GM12878 (cell line): ENCODE measurements at regions of chr11 and their contacts with region 1.

Region 1: GRCh38 chr11:17730608-17731462 is 3.7 kb upstream of the KCNC1 start:
- DNase-seq: peak; percentile 4
- ATAC-seq: peak; percentile 97
- H3K4me3 ChIP-seq: no peak overlapping the region
- H3K27ac ChIP-seq: no peak overlapping the region
- H3K4me1 ChIP-seq: no peaks in the 10 kb centered on the region
- H3K27me3 ChIP-seq: peaks cover 2 to 3% of the 10 kb centered on the region in 2 experiments; a peak in 2 of 4 replicates
- CTCF ChIP-seq: peak; percentile 88 to 97 (median 95)
- EP300 ChIP-seq: no peak
- POLR2A ChIP-seq: no peak
- RAD21 ChIP-seq: peak; percentile 95

Region 2: DNA sequence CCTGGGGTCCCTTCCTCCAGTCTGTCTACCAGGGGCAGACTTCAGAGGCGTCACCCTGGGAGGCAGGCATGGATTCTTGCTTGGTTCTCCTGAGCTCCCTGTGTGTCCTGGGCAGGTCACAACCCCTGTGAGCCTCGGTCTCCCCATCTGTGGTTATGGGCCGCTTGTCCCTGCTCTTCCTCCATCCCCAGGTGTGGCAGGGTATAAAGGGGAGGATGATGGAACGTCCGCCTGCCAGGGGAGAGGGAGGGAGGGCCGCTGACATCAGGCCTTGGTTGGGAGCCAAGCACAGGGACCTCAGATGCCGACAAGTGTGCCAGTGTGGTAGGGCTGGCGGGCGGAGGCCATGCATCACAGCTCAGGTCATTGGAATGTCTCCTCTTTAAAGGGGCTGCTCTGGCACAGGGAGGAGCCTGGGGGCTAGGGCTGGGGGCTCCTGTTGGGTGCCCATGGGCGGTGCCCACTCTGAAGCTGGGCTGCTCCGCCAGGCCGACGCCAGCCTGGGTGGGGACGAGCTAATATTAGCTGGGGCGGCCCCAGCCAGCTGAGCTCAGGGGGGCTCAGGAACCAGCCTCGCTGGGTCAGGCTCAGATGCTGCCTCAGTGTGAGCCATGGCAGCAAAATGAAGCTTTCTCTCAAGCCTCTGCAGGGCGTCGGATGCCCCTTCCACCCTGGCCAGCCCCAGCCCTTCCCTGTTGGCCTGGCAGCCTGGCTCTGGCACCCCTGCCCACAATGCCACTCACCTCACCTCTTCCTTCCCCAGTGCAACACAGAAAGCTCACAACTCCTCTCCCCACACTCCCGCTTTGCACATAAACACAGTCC is 16.5 kb after region 1 on chr11:
- CTCF ChIA-PET with region 1: interaction called, 13 read pairs
- POLR2A ChIA-PET with region 1: no interaction called
- RAD21 ChIA-PET with region 1: interaction called, 3 read pairs
- SMC1A ChIA-PET with region 1: interaction called, 5 read pairs
- in situ Hi-C with region 1: no loop called
- intact Hi-C with region 1: no loop called
- DNase-seq: no peak
- ATAC-seq: no peak
- H3K4me3 ChIP-seq: no peak overlapping the region
- H3K27ac ChIP-seq: no peak overlapping the region
- H3K4me1 ChIP-seq: no peaks in the 10 kb centered on the region
- H3K27me3 ChIP-seq: peaks cover 0 to 1% of the 10 kb centered on the region in 2 experiments; a peak in 2 of 4 replicates
- CTCF ChIP-seq: no peak
- EP300 ChIP-seq: no peak
- POLR2A ChIP-seq: no peak
- RAD21 ChIP-seq: no peak

Region 3: GRCh38 chr11:17770048-17770652 is 39.3 kb after region 1 on chr11:
- CTCF ChIA-PET with region 1: interaction called, 10 read pairs
- POLR2A ChIA-PET with region 1: no interaction called
- RAD21 ChIA-PET with region 1: interaction called, 3 read pairs
- SMC1A ChIA-PET with region 1: no interaction called
- in situ Hi-C with region 1: no loop called
- intact Hi-C with region 1: no loop called
- DNase-seq: no peak
- ATAC-seq: peak; percentile 33; the same call in 2 of the 3 replicates
- H3K4me3 ChIP-seq: no peak overlapping the region
- H3K27ac ChIP-seq: no peak overlapping the region
- H3K4me1 ChIP-seq: no peaks in the 10 kb centered on the region
- H3K27me3 ChIP-seq: no peaks in the 10 kb centered on the region
- CTCF ChIP-seq: peak in 2 of 3 experiments; percentile 12 to 20; a peak in 1 of 6 replicates
- EP300 ChIP-seq: no peak
- POLR2A ChIP-seq: no peak
- RAD21 ChIP-seq: no peak

Region 4: DNA sequence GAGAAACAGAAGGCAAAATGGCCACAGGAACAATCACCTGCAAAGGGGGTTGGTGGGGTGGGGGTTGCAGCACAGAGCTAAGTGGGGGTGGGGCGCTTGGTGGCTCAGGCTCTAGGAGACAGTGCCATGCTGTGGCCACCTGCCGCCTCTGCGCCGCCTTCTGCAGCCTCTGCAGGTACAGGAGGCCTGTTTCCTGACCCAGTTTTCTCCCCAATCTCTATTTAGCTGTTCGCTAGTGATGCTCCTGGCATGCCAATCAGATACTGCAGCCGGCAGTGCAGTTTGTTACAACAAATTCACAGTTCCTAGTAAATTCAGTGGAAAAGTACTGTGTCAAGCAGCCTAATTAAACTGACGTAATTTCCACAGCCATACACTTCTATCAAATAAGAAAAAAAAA is 175.6 kb after region 1 on chr11:
- CTCF ChIA-PET with region 1: interaction called, 12 read pairs
- POLR2A ChIA-PET with region 1: no interaction called
- RAD21 ChIA-PET with region 1: interaction called, 4 read pairs
- SMC1A ChIA-PET with region 1: interaction called, 8 read pairs
- in situ Hi-C with region 1: no loop called
- intact Hi-C with region 1: no loop called
- DNase-seq: no peak
- ATAC-seq: peak; percentile 60; the same call in 2 of the 3 replicates
- H3K4me3 ChIP-seq: no peak overlapping the region
- H3K27ac ChIP-seq: no peak overlapping the region
- H3K4me1 ChIP-seq: peaks cover 5% of the 10 kb centered on the region; the same call in 1 of the 2 replicates
- H3K27me3 ChIP-seq: no peaks in the 10 kb centered on the region
- CTCF ChIP-seq: 0 out of 6 replicates have a peak, but pooled peaks of 1 of the 3 experiments have one; percentile 15
- EP300 ChIP-seq: no peak
- POLR2A ChIP-seq: no peak
- RAD21 ChIP-seq: 0 out of 2 replicates have a peak, but pooled peaks have one; percentile 2

Region 5: DNA sequence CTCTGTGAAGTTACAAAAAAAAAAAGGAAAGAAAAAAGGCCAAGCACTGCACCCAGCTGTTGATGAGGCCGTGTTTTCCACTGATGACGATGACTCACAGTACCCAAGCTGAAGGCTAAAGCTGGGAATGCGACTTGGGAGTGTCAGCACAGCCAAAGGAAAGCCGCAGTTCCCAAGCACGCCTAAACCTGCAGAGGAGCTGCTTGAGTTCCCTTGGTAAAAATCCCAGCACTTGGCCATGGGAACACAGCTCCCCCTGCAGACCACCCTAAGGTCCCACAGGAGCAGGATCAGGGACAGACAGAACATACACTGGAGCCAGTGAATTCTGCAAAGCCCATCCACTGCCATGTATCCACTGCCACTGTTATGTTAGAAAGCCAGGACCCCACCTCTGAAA is 242.2 kb after region 1 on chr11:
- CTCF ChIA-PET with region 1: interaction called, 268 read pairs
- POLR2A ChIA-PET with region 1: no interaction called
- RAD21 ChIA-PET with region 1: interaction called, 76 read pairs
- SMC1A ChIA-PET with region 1: interaction called, 99 read pairs
- in situ Hi-C with region 1: loop called (anchors 5 kb)
- intact Hi-C with region 1: no loop called
- DNase-seq: no peak
- ATAC-seq: peak; percentile 43; the same call in 1 of the 3 replicates
- H3K4me3 ChIP-seq: no peak overlapping the region
- H3K27ac ChIP-seq: no peak overlapping the region
- H3K4me1 ChIP-seq: no peaks in the 10 kb centered on the region
- H3K27me3 ChIP-seq: no peaks in the 10 kb centered on the region
- CTCF ChIP-seq: peak; percentile 26 to 58 (median 42); a peak in 4 of 6 replicates
- EP300 ChIP-seq: no peak
- POLR2A ChIP-seq: no peak
- RAD21 ChIP-seq: peak; percentile 33; the same call in 1 of the 2 replicates

Region 6: GRCh38 chr11:17986007-17986710 is 255.3 kb after region 1 on chr11:
- CTCF ChIA-PET with region 1: interaction called, 268 read pairs
- POLR2A ChIA-PET with region 1: no interaction called
- RAD21 ChIA-PET with region 1: interaction called, 76 read pairs
- SMC1A ChIA-PET with region 1: interaction called, 99 read pairs
- in situ Hi-C with region 1: no loop called
- intact Hi-C with region 1: no loop called
- DNase-seq: no peak
- ATAC-seq: no peak
- H3K4me3 ChIP-seq: no peak overlapping the region
- H3K27ac ChIP-seq: no peak overlapping the region
- H3K4me1 ChIP-seq: no peaks in the 10 kb centered on the region
- H3K27me3 ChIP-seq: no peaks in the 10 kb centered on the region
- CTCF ChIP-seq: no peak
- EP300 ChIP-seq: no peak
- POLR2A ChIP-seq: no peak
- RAD21 ChIP-seq: no peak

Region 7: GRCh38 chr11:18567081-18567480 is 836.2 kb after region 1 on chr11:
- CTCF ChIA-PET with region 1: no interaction called
- POLR2A ChIA-PET with region 1: no interaction called
- RAD21 ChIA-PET with region 1: no interaction called
- SMC1A ChIA-PET with region 1: no interaction called
- in situ Hi-C with region 1: no loop called
- intact Hi-C with region 1: no loop called
- DNase-seq: no peak
- ATAC-seq: no peak
- H3K4me3 ChIP-seq: no peak overlapping the region
- H3K27ac ChIP-seq: no peak overlapping the region
- H3K4me1 ChIP-seq: no peaks in the 10 kb centered on the region
- H3K27me3 ChIP-seq: no peaks in the 10 kb centered on the region
- CTCF ChIP-seq: no peak
- EP300 ChIP-seq: no peak
- POLR2A ChIP-seq: no peak
- RAD21 ChIP-seq: no peak